Activated T-helper 2 cell treated with anti-CD3 and anti-CD28 coated beads, Interferon-gamma antibody, Interleukin-2, Interleukin-4, amounts not matched to agents 10 μg/mL and 5 μg/mL and 100 μg/mL, durations not matched to agents 14 hours and 24 hours and 36 hours (primary cell): ENCODE measurements at regions of chr7 and their contacts with region 1.

Region 1: GRCh38 chr7:101138213-101138870 is 11.4 kb downstream of the SERPINE1 start:
- DNase-seq: peak; percentile 67
- H3K4me3 Mint-ChIP-seq: peak overlapping the region; percentile 42
- H3K27ac Mint-ChIP-seq: peak overlapping the region; percentile 50
- H3K4me1 Mint-ChIP-seq: peaks cover 42% of the 10 kb centered on the region
- H3K27me3 Mint-ChIP-seq: peaks cover 22% of the 10 kb centered on the region

Region 2: DNA sequence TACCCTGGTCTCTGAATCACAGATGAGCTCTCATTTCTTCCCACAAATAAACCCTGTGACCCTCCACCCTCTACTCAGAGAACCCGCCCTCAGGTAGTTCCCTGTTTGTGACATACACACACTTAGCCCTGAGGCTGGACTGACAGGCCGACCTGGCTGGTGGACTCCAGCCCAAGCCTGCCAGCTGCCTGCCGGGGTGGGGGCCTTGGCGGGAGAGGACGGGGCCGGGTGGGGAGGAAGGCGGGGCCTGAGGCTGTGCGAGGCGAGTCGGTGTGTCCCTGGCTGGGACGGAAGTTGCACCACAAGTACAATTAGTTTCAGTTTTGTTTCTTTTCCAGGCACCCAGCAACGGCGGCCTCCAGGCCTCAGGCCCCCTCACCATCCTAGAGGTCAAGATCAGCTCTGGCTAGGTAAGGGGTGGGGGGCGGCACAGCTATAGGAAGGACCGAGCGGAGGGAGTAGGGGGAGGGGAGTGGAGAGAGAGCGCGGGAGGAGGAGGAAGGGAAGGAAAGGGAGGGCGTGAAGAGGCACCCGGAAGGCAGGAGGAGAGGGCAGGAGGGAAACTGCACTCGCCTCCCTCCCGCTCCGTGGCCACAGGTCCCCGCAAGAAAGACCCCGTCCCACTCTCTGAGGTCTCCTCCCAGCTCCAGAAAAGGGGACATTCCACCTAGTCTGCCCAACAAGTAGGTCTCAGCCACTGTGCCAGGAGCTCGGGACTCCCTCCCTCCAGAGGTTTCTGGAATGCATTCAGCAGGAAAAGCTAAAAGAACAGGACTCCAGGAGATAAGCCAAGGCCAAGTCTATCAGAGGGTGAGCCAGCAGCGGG is 53.0 kb before region 1 on chr7 and contains the start of gene TRIM56:
- intact Hi-C with region 1: loop called (anchors 1 kb)
- DNase-seq: peak; percentile 73
- H3K4me3 Mint-ChIP-seq: peak within 1 kb of the TSS; percentile 100
- H3K27ac Mint-ChIP-seq: peak within 1 kb of the TSS; percentile 99
- H3K4me1 Mint-ChIP-seq: peaks cover 17% of the 10 kb centered on the region
- H3K27me3 Mint-ChIP-seq: no peaks in the 10 kb centered on the region
- total RNA-seq, gene TRIM56: 42.6 and 43.8 TPM in 2 replicates

Region 3: GRCh38 chr7:101124376-101125056 is 13.8 kb before region 1 on chr7:
- intact Hi-C with region 1: loop called (anchors 1 kb)
- DNase-seq: no peak
- H3K4me3 Mint-ChIP-seq: peak overlapping the region; percentile 15
- H3K27ac Mint-ChIP-seq: peak overlapping the region; percentile 1
- H3K4me1 Mint-ChIP-seq: peaks cover 47% of the 10 kb centered on the region
- H3K27me3 Mint-ChIP-seq: peaks cover 50% of the 10 kb centered on the region

Region 4: GRCh38 chr7:101287032-101287431 is 148.7 kb after region 1 on chr7:
- intact Hi-C with region 1: loop called (anchors 10 kb)
- DNase-seq: no peak
- H3K4me3 Mint-ChIP-seq: no peak overlapping the region
- H3K27ac Mint-ChIP-seq: no peak overlapping the region
- H3K4me1 Mint-ChIP-seq: peaks cover 4% of the 10 kb centered on the region
- H3K27me3 Mint-ChIP-seq: peaks cover 7% of the 10 kb centered on the region